Caco-2 (cell line): ENCODE measurements at regions of chr19 and their contacts with region 1.

Region 1: DNA sequence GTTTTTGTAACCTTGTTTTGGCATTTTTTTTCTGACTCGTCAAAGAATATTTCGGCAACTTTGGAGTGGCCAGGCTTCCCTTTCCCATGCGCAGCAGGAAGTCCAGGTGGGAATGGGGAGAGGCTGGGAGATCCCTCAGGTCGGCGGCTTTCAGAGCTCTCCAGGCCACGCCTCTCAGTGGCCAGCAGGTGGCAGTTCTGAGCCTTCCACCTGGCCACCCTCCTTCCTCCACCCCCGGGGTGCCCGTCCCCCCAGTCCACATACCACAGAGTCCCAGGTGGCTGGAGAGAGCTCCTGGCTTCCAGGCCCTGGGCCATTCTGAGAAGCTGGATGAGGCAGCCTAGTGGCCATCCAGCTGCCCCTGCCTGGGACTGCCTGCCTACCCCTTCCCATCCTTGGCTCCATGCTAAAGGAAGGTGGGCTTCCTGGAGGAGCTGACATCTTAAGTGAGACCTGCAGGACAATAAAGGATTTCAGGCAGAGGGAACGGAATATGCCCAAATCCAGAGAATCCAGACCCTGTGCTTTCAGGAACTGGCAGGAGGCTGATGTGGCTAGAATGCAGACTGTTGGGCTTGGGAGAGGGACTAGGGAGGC is 46.3 kb downstream of the CCNE1 start:
- DNase-seq: peak; percentile 74 to 82
- H3K4me3 ChIP-seq: no peak overlapping the region
- H3K4me3 Mint-ChIP-seq: no peak overlapping the region
- H3K27ac Mint-ChIP-seq: no peak overlapping the region
- H3K4me1 ChIP-seq: peaks cover 11% of the 10 kb centered on the region
- H3K4me1 Mint-ChIP-seq: peaks cover 13% of the 10 kb centered on the region
- H3K27me3 ChIP-seq: no peaks in the 10 kb centered on the region
- H3K27me3 Mint-ChIP-seq: no peaks in the 10 kb centered on the region
- CTCF ChIP-seq: peak; percentile 86

Region 2: DNA sequence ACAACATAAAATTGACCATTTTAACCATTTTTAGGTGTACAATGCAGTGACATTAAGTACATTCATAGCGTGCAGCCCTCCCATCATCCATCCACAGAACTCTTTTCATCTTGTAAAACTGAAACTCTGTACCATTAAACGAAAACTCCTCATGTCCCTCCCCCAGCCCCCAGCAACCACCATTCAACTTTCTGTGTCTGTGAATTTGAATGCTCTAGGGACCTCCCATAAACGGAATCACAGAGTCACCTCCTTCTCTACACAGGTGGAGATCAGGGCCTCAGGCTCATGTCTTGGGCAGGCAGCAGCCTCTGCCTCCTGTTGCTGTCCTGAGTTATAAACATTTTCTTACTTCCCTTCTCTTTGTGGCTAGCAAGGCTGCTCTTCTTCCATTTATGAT is 53.6 kb before region 1 on chr19:
- CTCF ChIA-PET with region 1: no interaction called
- POLR2A ChIA-PET with region 1: no interaction called
- intact Hi-C with region 1: no loop called
- DNase-seq: no peak
- H3K4me3 ChIP-seq: no peak overlapping the region
- H3K4me3 Mint-ChIP-seq: no peak overlapping the region
- H3K27ac Mint-ChIP-seq: no peak overlapping the region
- H3K4me1 ChIP-seq: peaks cover 4% of the 10 kb centered on the region; the same call in 1 of the 2 replicates
- H3K4me1 Mint-ChIP-seq: no peaks in the 10 kb centered on the region
- H3K27me3 ChIP-seq: no peaks in the 10 kb centered on the region
- H3K27me3 Mint-ChIP-seq: no peaks in the 10 kb centered on the region
- CTCF ChIP-seq: no peak

Region 3: DNA sequence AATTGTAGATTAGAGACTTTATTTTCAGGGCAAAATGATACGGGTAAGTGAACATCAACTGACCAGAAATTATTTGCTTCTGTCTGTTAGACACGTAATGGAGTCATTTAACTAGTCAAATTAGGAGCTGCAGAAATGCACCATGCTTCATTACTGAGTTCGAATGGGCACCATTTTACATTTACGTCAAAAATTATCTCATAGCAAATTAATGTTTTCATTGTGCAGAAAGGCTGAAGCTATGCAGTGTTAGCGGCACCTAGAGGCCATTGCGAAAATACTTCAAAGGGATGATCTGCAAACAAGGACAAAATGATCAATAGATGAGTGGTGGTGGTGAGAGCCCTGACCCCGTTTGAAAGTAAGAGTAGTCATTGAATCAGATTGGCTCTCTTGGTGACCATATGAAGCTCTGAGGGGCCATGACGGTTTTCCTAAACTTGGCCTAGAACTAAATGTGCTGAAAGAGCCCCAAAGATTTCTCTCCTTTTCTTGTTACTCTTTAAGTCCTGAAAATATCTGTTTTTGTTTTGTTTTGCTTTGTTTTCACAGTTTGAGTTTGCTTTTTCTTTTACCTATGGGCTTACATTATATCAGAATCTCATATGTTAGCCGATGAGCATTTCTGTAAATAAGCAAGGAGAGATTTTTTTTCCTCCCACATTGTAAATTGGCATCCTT is 792.0 kb after region 1 on chr19:
- CTCF ChIA-PET with region 1: no interaction called
- POLR2A ChIA-PET with region 1: no interaction called
- intact Hi-C with region 1: loop called (anchors 2 kb)
- DNase-seq: peak in 1 of 2 experiments; percentile 48
- H3K4me3 ChIP-seq: no peak overlapping the region
- H3K4me3 Mint-ChIP-seq: no peak overlapping the region
- H3K27ac Mint-ChIP-seq: no peak overlapping the region
- H3K4me1 ChIP-seq: no peaks in the 10 kb centered on the region
- H3K4me1 Mint-ChIP-seq: no peaks in the 10 kb centered on the region
- H3K27me3 ChIP-seq: no peaks in the 10 kb centered on the region; the same call in 1 of the 2 replicates
- H3K27me3 Mint-ChIP-seq: peaks cover 28% of the 10 kb centered on the region
- CTCF ChIP-seq: peak; percentile 77 to 91